SK-N-SH (cell line): ENCODE measurements at regions of chr2 and their contacts with region 1.

Region 1: DNA sequence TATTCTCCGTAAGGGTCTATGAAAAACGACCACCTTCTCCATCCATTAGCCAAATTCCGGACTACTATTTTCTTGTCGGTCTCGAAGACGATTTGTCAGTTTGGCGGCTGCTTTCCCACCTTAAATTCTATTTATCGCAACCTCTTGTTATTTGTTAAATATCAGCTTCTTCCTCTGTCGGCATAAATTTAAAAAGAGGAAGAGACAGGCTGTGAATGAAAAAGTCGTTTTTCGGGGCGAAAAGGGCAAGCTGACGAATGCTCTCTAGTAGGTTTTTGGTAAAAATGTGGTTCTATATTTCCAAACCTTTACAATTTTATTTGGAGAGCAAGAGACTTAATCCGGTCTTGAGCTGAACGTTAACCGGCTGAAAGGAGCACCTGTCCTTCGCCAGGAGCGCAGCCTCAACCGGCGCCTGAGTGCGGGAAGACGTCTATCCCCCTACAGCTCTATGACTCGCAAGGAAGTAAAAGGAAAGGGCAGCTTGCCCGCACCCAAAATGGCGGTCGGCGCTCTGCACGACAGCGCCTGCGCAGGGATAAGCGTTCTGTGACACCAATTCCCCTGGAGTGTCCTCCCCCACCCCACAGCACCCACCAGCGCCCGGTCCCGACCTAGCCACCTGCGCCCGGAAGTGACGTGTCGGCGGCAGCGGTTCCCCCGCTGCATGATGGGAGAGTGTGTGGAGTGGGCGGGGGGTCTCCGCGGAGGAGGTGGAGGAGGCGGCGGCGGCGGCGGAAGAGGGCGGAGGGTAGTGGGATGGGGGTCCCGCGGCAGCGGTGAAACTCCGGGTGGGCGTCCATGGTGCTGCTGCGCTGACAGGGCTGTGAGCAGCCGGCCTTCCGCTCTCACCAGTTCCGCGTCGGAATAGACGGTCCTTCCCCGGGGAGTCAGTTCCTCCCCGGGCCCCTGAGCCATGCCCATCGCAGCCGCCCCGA is at the start of gene AFTPH:
- DNase-seq: peak; percentile 99
- H3K4me3 ChIP-seq: peak within 1 kb of the TSS; percentile 88 to 94
- H3K27ac ChIP-seq: peak within 1 kb of the TSS; percentile 71 to 92
- H3K4me1 ChIP-seq: peaks cover 0 to 6% of the 10 kb centered on the region in 2 experiments; a peak in 2 of 4 replicates
- H3K27me3 ChIP-seq: peaks cover 9% of the 10 kb centered on the region; the same call in 1 of the 2 replicates
- CTCF ChIP-seq: no peak
- EP300 ChIP-seq: 0 out of 4 replicates have a peak, but pooled peaks of 1 of the 2 experiments have one; percentile 7
- RAD21 ChIP-seq: no peak
- polyA plus RNA-seq, gene AFTPH: 7.4 and 9.8 TPM in 2 replicates

Region 2: DNA sequence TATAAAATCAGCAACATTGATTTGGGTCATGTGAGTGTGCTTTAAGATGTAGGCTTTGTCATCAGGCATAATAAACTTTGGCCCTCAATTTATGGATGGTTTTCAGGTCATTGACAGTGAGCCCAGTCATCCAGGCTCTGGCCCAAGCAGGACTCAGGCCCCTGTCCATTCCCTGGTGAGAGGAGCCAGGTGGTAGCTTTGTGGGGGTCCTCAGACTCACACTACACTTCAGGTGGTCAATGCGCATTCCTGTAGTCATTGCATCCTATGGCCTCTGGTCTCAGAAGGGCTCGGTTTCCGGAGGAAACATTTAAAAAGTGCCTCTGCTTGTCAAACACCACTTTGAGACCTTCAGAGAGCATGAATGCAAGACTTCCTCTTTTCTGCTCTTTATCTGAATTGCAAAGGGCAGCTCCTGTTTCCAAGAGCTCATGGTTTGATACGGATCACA is 49.8 kb before region 1 on chr2:
- CTCF ChIA-PET with region 1: no interaction called
- POLR2A ChIA-PET with region 1: no interaction called
- DNase-seq: no peak
- H3K4me3 ChIP-seq: no peak overlapping the region
- H3K27ac ChIP-seq: no peak overlapping the region
- H3K4me1 ChIP-seq: no peaks in the 10 kb centered on the region; a peak in 1 of 4 replicates
- H3K27me3 ChIP-seq: peaks cover under 1% of the 10 kb centered on the region; the same call in 1 of the 2 replicates
- CTCF ChIP-seq: no peak
- EP300 ChIP-seq: no peak
- RAD21 ChIP-seq: no peak

Region 3: DNA sequence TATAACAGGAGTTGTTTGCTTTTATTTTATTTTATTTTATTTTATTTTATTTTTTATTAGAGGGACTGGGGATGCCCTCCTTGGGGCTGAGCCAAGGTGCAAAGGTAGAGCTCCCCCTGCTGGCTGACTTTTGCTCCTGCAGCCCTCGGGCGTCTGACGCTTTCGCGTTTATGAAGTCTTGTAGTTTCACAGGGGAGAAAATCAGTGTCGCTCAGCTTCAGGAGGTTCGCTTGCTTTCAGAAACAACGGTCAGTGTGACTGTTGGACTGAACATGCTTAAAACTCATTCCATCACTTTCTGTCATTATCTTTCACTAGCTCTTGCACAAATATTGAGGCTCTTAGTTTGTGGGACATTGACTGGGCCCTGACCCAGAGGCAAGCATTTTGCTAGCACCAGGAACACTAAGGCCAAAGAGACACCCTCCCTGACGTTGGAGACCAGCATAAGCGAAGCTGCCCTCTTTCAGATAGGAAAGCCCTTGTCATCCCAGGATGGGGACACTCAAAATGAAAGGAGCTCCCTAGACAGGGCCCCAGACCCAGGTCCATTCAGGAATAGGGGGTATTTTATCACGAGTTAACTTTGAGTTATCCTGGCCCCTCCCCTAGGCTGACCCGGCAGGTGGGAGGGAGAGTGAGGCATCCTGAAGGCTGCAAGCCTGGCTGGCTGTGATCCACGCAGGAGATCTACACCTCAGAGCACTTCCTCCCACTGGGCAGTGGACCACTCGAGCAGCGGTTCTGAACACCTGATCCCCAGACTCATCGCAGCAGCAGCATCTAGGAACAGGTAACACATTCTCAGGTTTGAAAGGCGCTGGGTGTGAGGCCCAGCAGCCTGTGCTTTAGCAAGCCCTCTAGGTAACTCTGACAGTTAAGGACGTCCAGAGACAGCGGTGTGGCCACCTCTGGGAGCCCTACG is 35.6 kb before region 1 on chr2:
- CTCF ChIA-PET with region 1: interaction called, 12 read pairs
- POLR2A ChIA-PET with region 1: no interaction called
- DNase-seq: peak; percentile 30
- H3K4me3 ChIP-seq: peak overlapping the region in 1 of 2 experiments; percentile 47; a peak in 1 of 4 replicates
- H3K27ac ChIP-seq: no peak overlapping the region; a peak in 1 of 4 replicates
- H3K4me1 ChIP-seq: peaks cover 0 to 16% of the 10 kb centered on the region in 2 experiments; a peak in 1 of 4 replicates
- H3K27me3 ChIP-seq: no peaks in the 10 kb centered on the region; the same call in 1 of the 2 replicates
- CTCF ChIP-seq: peak; percentile 79
- EP300 ChIP-seq: no peak
- RAD21 ChIP-seq: peak; percentile 59

Region 4: GRCh38 chr2:64504774-64505720 is 18.9 kb before region 1 on chr2:
- CTCF ChIA-PET with region 1: interaction called, 10 read pairs
- POLR2A ChIA-PET with region 1: no interaction called
- DNase-seq: no peak
- H3K4me3 ChIP-seq: no peak overlapping the region
- H3K27ac ChIP-seq: no peak overlapping the region
- H3K4me1 ChIP-seq: no peaks in the 10 kb centered on the region
- H3K27me3 ChIP-seq: no peaks in the 10 kb centered on the region
- CTCF ChIP-seq: no peak
- EP300 ChIP-seq: no peak
- RAD21 ChIP-seq: no peak

Region 5: DNA sequence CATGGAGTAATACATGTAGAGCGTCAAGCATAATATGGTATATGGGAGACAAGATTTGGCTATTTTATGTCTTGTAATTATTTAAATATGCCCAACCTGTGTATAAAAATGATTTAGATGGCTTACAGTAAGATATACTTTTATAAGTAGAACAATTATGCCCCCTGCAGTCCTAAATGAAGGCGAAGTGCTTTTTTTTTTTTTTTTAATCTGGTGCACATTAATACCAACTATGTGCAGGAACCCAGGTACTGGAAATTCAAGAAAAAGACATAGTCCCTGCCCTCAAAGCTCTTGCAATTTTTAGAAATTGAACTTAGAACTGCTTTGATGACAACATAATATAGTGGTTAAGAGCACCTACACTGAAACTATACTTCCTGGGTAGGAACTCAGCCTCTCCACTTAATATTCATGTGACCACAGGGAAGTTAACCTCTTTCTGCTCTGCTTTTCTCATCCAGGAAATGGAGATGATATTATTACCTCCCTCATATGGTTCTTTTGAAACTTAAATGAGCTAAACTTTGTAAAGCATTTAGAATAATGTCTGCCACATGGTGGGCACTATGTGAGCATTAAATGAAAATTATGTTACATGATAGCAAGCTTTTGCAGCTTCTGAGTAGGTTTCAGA is 38.3 kb after region 1 on chr2:
- CTCF ChIA-PET with region 1: interaction called, 13 read pairs
- POLR2A ChIA-PET with region 1: no interaction called
- DNase-seq: peak; percentile 12
- H3K4me3 ChIP-seq: no peak overlapping the region
- H3K27ac ChIP-seq: no peak overlapping the region
- H3K4me1 ChIP-seq: peaks cover 4 to 7% of the 10 kb centered on the region in 2 experiments; a peak in 3 of 4 replicates
- H3K27me3 ChIP-seq: no peaks in the 10 kb centered on the region
- CTCF ChIP-seq: peak; percentile 66
- EP300 ChIP-seq: no peak
- RAD21 ChIP-seq: peak; percentile 63

Region 6: DNA sequence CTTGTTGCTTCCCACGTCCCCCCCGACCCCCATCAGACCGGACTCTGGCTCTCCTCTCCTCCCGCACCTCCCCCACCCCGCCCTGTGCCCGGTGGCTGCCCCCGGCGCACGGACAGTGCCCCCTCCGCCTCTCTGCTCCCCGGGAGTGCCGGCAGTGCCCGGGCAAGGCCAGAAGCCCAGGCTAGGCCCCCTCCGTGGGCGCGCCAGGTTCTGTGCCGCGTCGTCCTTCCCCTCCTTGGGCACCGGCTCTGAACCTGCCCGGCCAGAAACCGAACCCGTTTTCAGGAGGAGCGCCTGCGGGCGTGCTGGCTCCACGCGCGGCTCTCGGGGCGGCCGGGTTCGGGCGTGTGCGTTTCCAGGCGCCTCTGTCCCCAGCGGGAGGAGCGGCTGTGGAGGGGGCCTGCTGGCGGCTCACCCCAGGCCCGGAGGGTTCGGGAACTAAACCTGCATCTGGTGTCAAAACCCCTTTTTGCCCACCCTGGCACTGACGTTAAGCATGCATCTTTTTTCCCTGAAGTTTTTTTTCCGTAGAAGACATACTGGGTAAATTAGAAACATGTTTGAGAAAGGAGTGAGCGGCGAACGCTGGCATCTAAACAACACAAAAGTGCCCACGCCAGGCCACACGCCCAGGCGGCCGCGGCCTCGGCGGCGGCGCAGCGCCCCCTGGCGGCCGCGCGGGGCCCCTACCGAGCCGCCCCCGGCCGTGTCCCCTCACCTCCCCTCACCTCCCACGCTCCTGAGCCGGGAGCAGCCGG is 341.3 kb after region 1 on chr2:
- CTCF ChIA-PET with region 1: interaction called, 14 read pairs
- POLR2A ChIA-PET with region 1: no interaction called
- DNase-seq: peak; percentile 95
- H3K4me3 ChIP-seq: peak overlapping the region; percentile 52 to 63
- H3K27ac ChIP-seq: peak overlapping the region; percentile 86 to 89
- H3K4me1 ChIP-seq: peaks cover 0 to 8% of the 10 kb centered on the region in 2 experiments; a peak in 1 of 4 replicates
- H3K27me3 ChIP-seq: no peaks in the 10 kb centered on the region
- CTCF ChIP-seq: peak; percentile 56; the same call in 1 of the 2 replicates
- EP300 ChIP-seq: peak in 1 of 2 experiments; percentile 27; a peak in 3 of 4 replicates
- RAD21 ChIP-seq: peak; percentile 76